Kidney (tissue), 22 donors: ENCODE measurements at regions of chr19 and their contacts with region 1.

Region 1: DNA sequence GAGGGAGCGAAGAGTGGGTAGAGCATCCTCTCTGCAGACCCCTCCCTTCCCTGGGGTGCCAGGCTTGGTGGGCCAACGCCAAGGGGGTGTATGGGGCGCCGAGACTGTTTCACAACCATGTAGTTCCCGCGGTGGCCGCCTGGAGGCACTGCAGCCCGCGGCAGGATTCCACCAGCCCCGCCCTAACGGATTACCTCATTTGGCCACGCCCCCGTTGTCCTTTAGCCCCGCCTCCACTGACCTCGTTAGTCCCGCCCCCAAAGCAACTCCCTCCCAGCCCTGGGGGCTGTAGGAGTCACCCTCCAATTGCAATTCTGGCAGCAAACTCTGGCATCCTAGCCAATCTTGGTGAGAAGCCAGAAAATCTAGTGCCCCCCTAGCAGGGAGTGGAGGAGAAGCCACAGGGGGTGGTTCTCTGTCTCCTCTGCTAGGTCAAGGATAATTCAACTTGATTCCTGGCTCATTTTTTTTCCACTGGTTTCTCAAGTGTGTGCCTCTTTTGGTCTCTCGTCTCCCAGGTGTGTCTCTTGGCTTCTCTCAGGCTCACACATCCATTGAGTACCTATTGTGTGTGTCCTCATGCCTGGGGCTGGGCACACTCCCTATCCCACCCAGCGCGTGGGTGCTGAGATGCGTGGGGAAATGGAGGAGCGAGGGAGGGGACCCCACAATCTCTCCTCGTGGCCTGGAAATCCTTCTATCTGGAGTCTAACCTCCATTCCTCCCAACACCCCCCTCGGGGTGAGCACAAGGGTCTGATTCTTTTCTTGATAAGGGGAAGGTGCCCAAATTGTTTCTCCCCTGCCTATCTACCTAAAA is 2.0 kb downstream of the OLFM2 start:
- DNase-seq: peak; percentile 76 to 88 (median 82)
- H3K4me3 ChIP-seq: no peak overlapping the region
- H3K27ac ChIP-seq: no peak overlapping the region
- H3K4me1 ChIP-seq: peaks cover 0 to 2% (median 0%) of the 10 kb centered on the region in 3 donors
- H3K27me3 ChIP-seq: no peaks in the 10 kb centered on the region
- CTCF ChIP-seq: peak; percentile 44

Region 2: DNA sequence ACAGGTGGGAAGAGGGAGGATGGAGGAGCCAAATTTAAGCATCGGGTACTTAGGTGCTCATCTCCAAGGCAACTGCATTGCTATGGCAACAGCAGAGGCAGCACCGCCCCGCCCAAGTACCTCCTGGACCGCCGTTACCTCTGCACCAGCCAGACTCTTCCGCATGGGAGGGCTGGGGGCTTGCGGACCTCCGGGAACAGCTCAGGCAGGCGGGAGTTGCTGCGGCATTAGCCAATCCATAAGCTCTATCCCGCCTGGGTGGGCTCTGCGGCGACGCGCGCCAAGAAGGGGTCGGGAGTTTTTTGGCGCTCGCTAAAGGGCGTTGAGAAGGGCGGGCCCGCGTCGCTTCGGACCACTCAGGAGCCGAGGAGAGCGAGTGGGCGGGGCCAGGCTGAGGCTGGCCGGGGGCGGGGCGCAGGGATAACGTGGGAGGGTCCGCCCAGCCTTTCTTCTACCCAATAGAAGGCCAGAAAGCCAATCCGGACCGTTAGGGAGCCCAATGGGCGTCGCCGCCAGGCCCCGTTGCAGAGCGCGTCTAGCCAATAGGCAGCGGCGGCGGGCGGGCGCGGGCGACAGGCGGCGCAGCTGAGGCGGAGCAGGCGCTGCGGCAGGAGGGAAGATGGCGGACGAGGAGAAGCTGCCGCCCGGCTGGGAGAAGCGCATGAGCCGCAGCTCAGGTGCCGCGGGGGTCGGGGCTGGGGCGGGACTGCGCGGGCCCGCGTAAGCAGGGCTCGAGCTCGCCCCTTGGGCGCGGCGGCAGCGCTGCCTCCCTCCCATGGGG is 99.4 kb before region 1 on chr19 and contains the start of gene PIN1:
- intact Hi-C with region 1: no loop called
- DNase-seq: peak; percentile 99 to 100 (median 100)
- H3K4me3 ChIP-seq: peak within 1 kb of the TSS; percentile 71 to 89 (median 82)
- H3K27ac ChIP-seq: peak within 1 kb of the TSS in 1 of 2 donors; percentile 71
- H3K4me1 ChIP-seq: peaks cover 0 to 10% (median 10%) of the 10 kb centered on the region in 3 donors
- H3K27me3 ChIP-seq: no peaks in the 10 kb centered on the region
- CTCF ChIP-seq: peak; percentile 66
- total RNA-seq, gene PIN1: 57.7 TPM

Region 3: GRCh38 chr19:10036601-10037071 is 102.3 kb after region 1 on chr19:
- intact Hi-C with region 1: loop called (anchors 10 kb)
- DNase-seq: no peak
- H3K4me3 ChIP-seq: no peak overlapping the region
- H3K27ac ChIP-seq: no peak overlapping the region
- H3K4me1 ChIP-seq: no peaks in the 10 kb centered on the region
- H3K27me3 ChIP-seq: peaks cover 3% of the 10 kb centered on the region
- CTCF ChIP-seq: no peak